ENCODE measurements at regions of chr3 and their contacts with region 1.

Region 1: DNA sequence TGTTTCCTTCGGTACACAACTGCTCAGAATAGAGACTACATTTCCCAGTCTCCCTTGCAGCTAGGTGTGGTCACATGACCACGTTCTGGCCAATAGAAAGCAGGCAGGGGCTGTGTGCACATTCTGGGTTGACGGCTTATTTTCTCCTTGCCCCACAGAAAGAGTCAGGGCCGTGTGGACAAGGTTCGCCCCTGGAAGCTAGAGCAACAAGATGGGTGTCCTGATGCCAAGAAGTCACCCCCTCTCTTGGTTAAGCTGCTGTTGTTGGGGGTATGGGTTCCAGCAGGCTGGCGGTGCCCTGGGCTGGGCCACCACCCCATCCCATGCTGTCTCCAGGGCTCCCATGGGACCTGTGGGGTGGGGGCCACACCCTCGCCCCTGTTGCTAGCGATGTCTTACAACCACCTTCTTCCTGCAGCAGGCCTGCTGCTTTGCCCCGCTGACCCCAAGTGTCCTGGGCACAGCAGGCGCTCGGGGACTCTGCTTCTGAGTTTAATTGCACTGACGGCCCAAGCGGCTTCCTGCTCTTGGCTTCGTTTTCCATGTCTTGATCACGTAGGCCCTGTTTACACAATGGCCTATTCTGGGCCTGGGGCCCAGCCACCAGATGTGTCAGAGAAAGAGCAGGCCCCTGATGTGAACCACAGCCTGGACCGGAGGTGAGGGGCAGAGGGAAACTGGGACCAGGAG is 24.9 kb downstream of the ABTB1 start:
- DNase-seq: peak; percentile 84 to 93
- H3K4me3 ChIP-seq: peak overlapping the region; percentile 27 to 33
- H3K27ac ChIP-seq: peak overlapping the region; percentile 85 to 94
- H3K4me1 ChIP-seq: peaks cover 24 to 44% of the 10 kb centered on the region in 2 donors
- H3K27me3 ChIP-seq: no peaks in the 10 kb centered on the region
- CTCF ChIP-seq: no peak

Region 2: DNA sequence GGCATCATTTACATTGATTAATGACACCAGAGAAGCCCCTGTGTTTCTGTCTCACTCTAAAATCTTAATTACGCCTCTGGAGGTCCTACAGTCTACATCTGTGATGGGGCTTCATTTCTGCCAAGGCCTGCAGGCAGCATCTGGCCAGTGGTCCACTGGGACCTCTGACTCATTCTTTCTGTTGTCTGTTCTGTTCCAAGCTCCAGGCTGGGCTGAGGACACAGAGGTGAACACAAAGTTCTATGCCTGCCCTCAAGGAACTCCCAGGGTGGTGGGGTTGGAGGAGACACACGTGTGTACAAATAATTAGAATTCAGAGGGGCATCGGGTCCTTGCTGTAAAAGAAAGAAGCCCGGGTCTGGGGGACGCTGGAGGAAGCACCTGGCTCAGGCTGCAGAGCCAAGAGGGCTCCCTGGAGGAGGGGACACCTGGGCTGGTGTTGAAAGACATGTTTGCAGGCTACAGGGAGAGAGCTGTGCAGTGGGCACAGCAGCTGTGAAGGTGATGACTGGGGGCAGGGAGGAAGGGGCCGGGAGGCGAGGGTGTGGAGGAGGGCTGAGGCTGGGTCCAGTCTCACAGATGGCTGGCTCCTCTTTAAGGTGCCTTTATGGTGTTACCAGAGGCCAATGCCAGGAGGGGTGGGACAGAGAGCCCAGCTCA is 608.1 kb before region 1 on chr3:
- intact Hi-C with region 1: no loop called
- DNase-seq: no peak
- H3K4me3 ChIP-seq: no peak overlapping the region
- H3K27ac ChIP-seq: no peak overlapping the region
- H3K4me1 ChIP-seq: no peaks in the 10 kb centered on the region
- H3K27me3 ChIP-seq: no peaks in the 10 kb centered on the region
- CTCF ChIP-seq: no peak

Region 3: GRCh38 chr3:127590593-127591477 is 106.9 kb before region 1 on chr3 and contains the start of gene TPRA1:
- intact Hi-C with region 1: loop called (anchors 2 kb)
- DNase-seq: peak; percentile 82 to 96
- H3K4me3 ChIP-seq: peak within 1 kb of the TSS; percentile 83 to 89
- H3K27ac ChIP-seq: peak within 1 kb of the TSS; percentile 89 to 90
- H3K4me1 ChIP-seq: peaks cover 3 to 18% of the 10 kb centered on the region in 2 donors
- H3K27me3 ChIP-seq: no peaks in the 10 kb centered on the region
- CTCF ChIP-seq: peak in 1 of 3 experiments; percentile 30
- total RNA-seq, gene TPRA1: 87.1 TPM

Region 4: DNA sequence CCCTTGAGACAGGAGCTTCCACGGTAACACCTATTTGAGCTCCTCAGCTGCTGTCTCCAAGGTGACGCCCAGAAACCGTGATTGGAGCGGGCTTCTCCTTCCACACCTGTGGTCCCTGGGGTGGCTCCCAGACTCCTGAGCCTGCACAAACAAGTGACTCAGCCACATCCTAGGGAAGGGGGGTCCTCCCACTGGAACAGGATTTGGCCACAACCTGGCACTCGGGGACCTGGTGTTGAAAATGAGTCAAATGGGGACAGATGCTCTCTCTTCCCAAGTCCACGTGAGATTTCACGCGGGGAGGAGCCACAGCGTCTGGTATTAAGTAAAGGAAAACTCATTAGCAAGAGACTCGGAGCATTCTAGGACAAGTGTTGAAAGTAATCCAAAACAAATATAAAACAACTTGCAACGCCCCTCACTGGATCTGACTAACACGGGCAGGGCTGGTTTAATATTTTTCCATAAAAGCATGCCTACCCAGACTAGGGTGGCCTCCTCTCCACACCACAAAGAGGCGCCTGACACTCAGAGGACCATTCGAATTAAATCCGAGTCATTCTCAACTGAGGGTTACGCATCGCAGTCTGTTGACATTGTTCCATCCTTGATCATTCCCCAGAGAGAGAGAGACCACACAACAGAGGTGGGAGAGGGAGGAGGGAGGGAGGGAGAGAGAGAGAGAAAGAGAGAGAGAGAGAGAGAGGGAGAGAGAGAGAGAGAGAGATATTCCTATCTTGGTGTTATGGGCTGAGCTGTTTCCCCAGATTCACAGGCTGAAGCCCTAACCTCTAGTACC is 50.2 kb after region 1 on chr3:
- intact Hi-C with region 1: loop called (anchors 1 kb)
- DNase-seq: peak; percentile 92 to 95
- H3K4me3 ChIP-seq: peak overlapping the region in 1 of 2 donors; percentile 28
- H3K27ac ChIP-seq: peak overlapping the region; percentile 84 to 85
- H3K4me1 ChIP-seq: peaks cover 8 to 28% of the 10 kb centered on the region in 2 donors
- H3K27me3 ChIP-seq: no peaks in the 10 kb centered on the region
- CTCF ChIP-seq: peak; percentile 12 to 27 (median 18)

Region 5: DNA sequence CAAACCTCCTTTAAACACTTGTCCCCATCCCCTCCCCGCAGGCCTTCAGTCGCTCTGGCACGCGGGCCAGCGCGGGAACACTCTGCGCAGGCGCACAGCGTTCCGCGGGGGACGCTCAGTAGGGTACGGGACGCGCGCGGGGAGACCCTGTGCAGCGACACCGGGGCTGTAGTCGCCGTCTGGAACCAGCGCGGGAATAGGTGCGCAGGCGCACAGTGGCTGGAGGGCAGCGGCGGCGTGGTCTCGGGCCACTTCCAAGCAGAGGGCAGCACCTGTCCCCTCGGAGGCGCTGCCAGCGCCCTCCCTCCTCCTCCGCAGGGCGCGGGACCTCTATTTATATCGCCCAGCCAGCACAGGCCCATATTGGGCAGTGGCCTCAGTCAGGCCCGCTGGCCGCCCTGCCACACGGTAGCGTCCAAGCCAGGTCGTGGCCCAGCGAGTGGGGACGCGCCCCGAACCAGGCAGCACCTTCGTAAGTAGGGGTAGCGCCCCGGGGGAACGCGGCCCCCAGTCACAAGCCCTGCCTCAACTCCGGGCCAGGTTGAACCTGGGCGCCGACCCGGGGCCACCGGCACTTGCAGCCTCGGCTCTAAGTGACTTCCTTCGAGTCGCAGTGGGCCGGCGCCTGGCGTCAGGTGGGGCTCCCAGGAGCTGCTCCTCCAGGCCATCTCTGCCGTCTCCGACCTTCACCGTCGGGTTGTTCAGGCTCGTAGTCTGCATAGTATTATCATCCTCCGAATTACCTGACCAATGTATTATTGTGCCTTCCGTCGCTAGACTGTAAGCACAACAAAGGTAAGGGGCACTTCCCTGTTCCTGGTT is 217.6 kb after region 1 on chr3 and contains the start of gene KBTBD12:
- intact Hi-C with region 1: loop called (anchors 5 kb)
- DNase-seq: peak in 1 of 2 donors; percentile 73
- H3K4me3 ChIP-seq: peak within 1 kb of the TSS; percentile 66 to 84
- H3K27ac ChIP-seq: peak within 1 kb of the TSS; percentile 79 to 86
- H3K4me1 ChIP-seq: peaks cover 0 to 14% of the 10 kb centered on the region in 2 donors
- H3K27me3 ChIP-seq: no peaks in the 10 kb centered on the region
- CTCF ChIP-seq: peak in 1 of 3 experiments; percentile 9
- total RNA-seq, gene KBTBD12: 3.5 TPM

Region 6: GRCh38 chr3:128051837-128052594 is 354.3 kb after region 1 on chr3 and contains the start of gene SEC61A1:
- intact Hi-C with region 1: loop called (anchors 5 kb)
- DNase-seq: peak; percentile 81 to 96
- H3K4me3 ChIP-seq: peak within 1 kb of the TSS; percentile 94 to 98
- H3K27ac ChIP-seq: peak within 1 kb of the TSS; percentile 96
- H3K4me1 ChIP-seq: peaks cover 15 to 29% of the 10 kb centered on the region in 2 donors
- H3K27me3 ChIP-seq: no peaks in the 10 kb centered on the region
- CTCF ChIP-seq: peak in 1 of 3 experiments; percentile 4
- total RNA-seq, gene SEC61A1: 193 TPM

Measured in ascending aorta (tissue), 2 donors.